Posterior vena cava (tissue), 2 donors: ENCODE measurements at regions of chr20 and their contacts with region 1.

Region 1: DNA sequence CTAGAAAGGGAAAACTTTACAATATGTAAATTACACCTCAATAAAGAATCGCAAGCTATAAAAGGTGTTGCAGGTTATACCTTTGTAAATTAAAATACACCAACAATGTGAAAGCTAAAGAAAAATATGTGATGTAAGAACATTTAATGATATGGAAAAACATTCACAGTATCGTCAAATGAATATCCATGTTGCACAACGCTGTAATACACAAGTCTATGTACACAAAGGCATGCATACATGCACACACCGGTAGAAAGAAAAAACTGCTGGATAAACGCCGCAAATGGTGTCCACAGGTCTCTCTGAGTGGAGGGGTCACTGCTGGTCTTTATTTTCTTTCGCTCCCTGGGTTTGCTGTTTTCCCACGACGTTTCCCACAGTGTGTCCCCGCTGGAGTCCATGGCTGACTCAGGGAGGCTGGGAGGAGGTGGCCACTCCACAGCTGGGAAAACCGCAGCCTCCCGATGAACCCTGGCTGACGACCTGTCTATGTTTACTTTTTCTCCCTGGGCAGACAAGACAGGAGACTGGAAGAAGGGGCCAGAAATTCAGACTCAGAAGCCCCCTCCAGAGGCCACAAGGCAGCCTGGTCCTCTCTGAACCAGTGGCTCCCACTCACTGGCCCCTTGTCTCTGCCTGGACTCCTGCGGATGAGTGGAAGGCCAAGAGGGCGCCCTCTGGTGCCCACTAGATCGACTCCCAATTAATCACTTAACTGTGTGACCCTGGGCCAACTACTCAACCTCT is 12.9 kb upstream of the BPI start:
- DNase-seq: peak; percentile 86

Region 2: GRCh38 chr20:38057351-38057972 is 233.5 kb before region 1 on chr20:
- intact Hi-C with region 1: loop called in 1 of 2 experiments (anchors 10 kb)
- DNase-seq: peak; percentile 94

Region 3: DNA sequence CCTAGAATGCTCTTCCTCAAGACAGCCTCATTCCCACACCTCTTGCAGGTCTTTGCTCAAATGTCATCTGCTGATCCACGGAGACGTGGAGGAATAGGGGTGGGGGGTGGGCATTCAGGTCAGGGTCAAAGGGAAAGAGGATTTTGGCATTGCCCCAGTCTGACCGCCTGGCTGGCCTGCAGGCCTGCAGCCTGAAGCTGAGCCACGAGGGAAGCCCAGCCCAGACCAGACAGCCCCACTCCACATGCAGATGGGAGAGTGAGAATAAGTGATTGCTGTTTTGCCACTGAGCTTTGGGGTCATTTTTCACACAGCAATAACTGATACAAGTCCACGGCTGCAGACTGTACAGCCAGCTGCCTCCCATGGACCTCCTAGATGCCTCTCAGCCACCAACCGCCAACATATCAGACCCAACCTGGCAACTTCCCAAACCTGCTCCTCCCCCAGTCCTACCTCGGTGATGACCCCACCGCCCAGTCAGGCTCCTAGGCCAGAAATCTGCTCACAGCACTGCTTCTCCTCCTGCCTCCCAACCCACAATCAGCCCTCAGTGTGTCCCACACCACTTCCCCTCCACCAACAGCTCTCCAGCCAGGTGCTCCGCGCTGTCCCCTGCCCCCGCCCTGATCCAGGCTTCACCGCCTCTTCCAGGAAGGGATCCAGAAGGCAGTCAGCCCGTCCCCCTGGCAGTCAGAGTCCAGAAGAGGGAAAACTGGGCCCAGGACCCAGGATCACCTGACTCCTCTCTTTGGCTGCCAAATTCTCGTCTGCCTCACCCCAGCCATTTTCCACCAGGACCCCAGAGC is 44.4 kb before region 1 on chr20:
- intact Hi-C with region 1: loop called in 1 of 2 experiments (anchors 5 kb)
- DNase-seq: no peak

Region 4: DNA sequence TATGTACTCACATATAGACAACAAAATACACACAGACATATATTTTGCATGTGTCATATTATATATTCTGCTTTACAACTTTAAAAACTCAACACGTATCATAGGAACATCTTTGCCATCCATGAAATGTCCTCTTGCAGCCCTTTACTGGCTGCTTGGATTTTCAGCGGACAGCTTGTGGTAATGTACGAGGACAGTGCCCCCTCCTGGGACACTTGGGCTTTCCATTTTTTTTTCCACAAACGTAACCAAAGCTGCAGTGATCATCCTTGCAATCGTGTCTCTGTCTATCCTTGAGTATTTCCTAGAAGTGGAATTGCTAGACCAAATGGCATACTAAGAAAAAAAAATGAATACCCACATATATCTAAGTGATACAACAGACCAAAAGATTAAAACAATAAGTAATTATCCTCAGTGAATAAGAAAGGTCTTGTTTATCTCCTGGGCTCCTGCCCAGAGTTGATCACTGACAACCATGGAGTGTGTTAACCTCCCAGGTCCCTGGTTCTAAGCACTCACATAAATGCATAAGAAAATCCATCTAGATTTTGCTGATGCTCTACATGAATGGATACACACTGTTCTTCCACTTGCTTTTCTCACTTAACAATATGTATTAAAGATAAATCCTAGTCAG is 31.1 kb after region 1 on chr20:
- intact Hi-C with region 1: no loop called
- DNase-seq: no peak